CD8-positive, alpha-beta T cell (primary cell): ENCODE measurements at regions of chr2 and their contacts with region 1.

Region 1: DNA sequence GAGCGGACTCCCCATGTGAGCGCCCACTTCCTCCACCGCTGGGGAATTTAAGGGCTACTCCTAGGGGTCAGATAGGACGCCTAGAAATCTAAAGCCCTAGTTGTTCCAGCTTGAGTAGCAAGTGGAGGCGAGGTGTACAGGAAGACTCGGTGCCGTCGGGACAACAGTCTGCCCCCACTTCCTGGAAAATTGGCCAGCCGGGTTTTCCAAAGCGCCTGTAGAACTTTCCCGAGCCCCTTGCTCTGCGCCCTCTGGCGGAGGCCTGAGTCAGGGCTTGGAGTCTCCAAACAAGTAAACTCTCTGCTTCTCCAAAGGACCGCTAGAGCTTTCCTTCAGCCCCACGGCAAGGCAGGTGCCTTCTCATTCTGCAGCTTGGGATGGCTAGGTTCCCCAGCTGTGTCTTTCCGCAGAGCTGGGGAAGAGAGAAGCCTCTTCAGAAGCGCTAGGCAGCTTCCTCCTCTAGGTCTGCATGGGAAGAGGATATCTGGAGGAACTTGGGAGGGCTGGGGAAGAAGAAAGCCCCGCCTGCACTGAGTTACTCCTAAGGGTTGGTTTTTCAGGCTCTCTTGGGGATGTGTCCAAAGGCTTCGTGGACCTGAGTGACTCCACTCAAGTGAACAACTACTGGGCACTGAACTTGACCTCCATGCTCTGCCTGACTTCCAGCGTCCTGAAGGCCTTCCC is 688 bp downstream of the SPR start:
- DNase-seq: peak in 8 of 9 experiments; percentile 31 to 64 (median 52)
- ATAC-seq: peak; percentile 24
- H3K4me3 ChIP-seq: peak overlapping the region; percentile 49 to 70
- H3K4me3 Mint-ChIP-seq: peak overlapping the region; percentile 77
- H3K27ac ChIP-seq: no peak overlapping the region
- H3K27ac Mint-ChIP-seq: no peak overlapping the region
- H3K4me1 ChIP-seq: peaks cover 6% of the 10 kb centered on the region
- H3K4me1 Mint-ChIP-seq: peaks cover 7% of the 10 kb centered on the region
- H3K27me3 ChIP-seq: peaks cover 1 to 17% of the 10 kb centered on the region in 2 experiments
- H3K27me3 Mint-ChIP-seq: peaks cover 56% of the 10 kb centered on the region
- CTCF ChIP-seq: peak; percentile 54

Region 2: DNA sequence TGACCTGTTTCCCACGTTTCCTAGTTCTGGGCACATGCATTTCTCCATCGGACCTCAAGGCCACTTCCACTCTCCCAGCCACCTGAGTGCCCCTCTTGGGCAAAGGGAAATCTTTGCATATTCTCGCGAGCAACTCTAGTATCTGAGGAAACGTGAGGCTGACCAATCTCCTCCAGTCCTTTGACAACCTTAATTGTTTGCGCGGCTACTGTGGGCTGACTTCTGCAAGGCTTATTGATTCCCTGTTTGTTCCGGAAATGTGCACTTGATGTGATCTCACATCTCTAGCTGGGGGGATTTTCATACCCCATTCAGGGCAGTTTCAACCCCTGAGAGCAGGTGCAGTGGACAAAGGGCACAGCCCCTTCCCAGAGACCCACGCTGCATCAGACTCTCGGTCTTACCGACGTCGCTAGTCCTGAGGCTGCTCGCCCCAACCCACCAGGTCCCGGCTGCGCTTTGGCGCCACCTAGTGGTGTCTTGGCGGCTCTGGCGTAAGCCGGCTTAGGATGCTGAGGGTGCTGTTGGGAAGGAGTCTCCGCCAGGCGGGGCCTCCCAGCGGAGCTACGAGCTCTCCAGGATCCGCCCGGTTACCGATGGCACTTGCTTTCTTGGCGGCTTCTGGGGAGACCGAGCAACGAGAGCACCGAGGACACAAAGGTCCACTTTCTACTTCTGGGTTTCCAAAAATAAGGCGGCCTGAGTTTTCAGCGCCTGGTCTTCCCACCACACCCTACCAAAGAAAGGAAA is 25.5 kb before region 1 on chr2:
- CTCF ChIA-PET with region 1: interaction called, 11 read pairs
- POLR2A ChIA-PET with region 1: no interaction called
- intact Hi-C with region 1: no loop called
- DNase-seq: peak; percentile 69 to 91 (median 84)
- ATAC-seq: peak; percentile 94
- H3K4me3 ChIP-seq: peak overlapping the region; percentile 0 to 16
- H3K4me3 Mint-ChIP-seq: peak overlapping the region; percentile 48
- H3K27ac ChIP-seq: no peak overlapping the region
- H3K27ac Mint-ChIP-seq: no peak overlapping the region
- H3K4me1 ChIP-seq: peaks cover 5% of the 10 kb centered on the region
- H3K4me1 Mint-ChIP-seq: peaks cover 11% of the 10 kb centered on the region
- H3K27me3 ChIP-seq: peaks cover 8 to 13% of the 10 kb centered on the region in 2 experiments
- H3K27me3 Mint-ChIP-seq: peaks cover 54% of the 10 kb centered on the region
- CTCF ChIP-seq: peak; percentile 73

Region 3: DNA sequence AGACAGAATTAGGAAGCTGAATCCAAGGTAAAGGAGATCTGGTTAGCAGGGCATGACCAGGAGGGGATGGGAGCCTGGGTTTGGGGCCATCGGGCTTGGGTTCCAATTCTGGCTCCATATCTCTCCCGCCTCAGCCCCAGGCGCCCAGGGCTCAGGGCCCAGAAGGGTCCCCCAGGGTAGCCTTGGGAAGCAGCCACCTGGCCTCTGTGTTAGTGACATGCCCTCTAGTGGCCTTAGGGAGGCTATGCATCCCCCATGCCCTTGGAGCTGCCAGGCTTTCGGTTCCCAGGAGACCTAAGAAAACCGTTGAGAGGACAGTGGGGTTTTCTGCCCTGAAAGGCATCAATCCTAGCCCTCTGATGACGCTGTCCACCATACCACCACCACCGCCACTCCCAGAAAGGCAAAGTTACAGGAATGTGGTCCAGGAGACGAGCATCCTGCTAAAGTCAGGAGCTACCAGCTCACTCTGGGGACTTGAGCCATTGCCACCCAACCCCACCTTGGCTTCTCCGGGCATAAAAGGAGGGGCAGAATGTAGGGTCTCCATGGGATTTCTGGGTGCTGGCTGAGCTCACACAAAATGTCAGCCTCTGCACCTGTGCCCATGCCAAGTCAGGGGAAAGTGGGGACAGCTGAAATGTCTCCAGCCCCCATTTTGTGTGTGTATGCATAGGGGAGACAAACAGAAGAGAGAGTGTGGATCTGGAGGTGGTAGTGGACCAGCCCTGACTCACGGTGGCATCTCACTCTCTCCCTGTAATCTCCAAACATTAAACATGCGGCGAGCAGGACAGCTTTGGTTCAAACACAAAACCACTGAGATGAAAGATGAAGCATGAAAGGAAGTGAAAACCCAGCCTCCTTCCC is 85.9 kb after region 1 on chr2:
- CTCF ChIA-PET with region 1: interaction called, 34 read pairs
- POLR2A ChIA-PET with region 1: no interaction called
- intact Hi-C with region 1: loop called in 1 of 2 experiments (anchors 1 kb)
- DNase-seq: peak in 6 of 9 experiments; percentile 12 to 59 (median 33)
- ATAC-seq: peak; percentile 72
- H3K4me3 ChIP-seq: no peak overlapping the region
- H3K4me3 Mint-ChIP-seq: no peak overlapping the region
- H3K27ac ChIP-seq: no peak overlapping the region
- H3K27ac Mint-ChIP-seq: no peak overlapping the region
- H3K4me1 ChIP-seq: no peaks in the 10 kb centered on the region
- H3K4me1 Mint-ChIP-seq: no peaks in the 10 kb centered on the region
- H3K27me3 ChIP-seq: no peaks in the 10 kb centered on the region
- H3K27me3 Mint-ChIP-seq: no peaks in the 10 kb centered on the region
- CTCF ChIP-seq: peak; percentile 59

Region 4: DNA sequence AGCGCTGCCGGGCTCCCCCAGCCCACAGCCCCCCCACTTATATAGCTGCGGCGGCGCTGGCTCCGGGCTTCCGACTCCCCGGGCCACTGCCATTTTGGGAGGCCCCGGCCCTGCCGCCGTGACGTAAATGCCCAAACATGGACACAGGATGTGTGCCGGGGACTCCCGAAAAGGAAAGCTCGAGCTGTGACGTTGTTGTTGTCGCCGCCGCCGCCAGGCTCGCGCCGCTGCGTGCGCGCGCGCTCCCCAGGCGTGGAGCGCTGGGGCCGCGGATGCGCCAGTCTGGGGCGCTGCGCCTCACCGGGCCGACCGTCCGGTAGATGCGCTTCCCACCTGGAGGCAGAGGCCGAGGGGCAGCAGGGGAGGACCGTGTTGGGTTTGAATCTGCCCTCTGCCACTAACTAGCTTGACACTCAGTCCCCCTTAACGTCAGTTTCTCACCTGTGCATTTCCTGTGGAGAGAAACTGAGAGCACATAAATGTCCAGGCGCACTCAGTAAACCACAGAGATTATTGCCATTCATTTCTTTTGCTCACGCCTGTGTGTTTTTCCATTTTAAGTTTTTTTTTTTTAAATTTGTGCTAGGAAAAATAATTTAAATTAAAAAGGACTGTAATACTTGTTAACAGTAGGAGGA is 405.8 kb after region 1 on chr2 and contains the start of gene EGR4:
- CTCF ChIA-PET with region 1: no interaction called
- POLR2A ChIA-PET with region 1: no interaction called
- intact Hi-C with region 1: loop called in 1 of 2 experiments (anchors 10 kb)
- DNase-seq: peak; percentile 74 to 96 (median 84)
- ATAC-seq: peak; percentile 92
- H3K4me3 ChIP-seq: peak within 1 kb of the TSS; percentile 51 to 73
- H3K4me3 Mint-ChIP-seq: peak within 1 kb of the TSS; percentile 78
- H3K27ac ChIP-seq: no peak within 1 kb of the TSS
- H3K27ac Mint-ChIP-seq: no peak within 1 kb of the TSS
- H3K4me1 ChIP-seq: peaks cover 26% of the 10 kb centered on the region
- H3K4me1 Mint-ChIP-seq: peaks cover 14% of the 10 kb centered on the region
- H3K27me3 ChIP-seq: peaks cover 35 to 37% of the 10 kb centered on the region in 2 experiments
- H3K27me3 Mint-ChIP-seq: peaks cover 62% of the 10 kb centered on the region
- CTCF ChIP-seq: no peak
- total RNA-seq, gene EGR4: 0.14 to 0.22 TPM